MCF 10A (cell line): ENCODE measurements at regions of chr15 and their contacts with region 1.

Region 1: GRCh38 chr15:90387537-90388461 is at the start of gene IQGAP1:
- DNase-seq: peak; percentile 96
- H3K4me3 Mint-ChIP-seq: peak within 1 kb of the TSS; percentile 96
- H3K27ac Mint-ChIP-seq: peak within 1 kb of the TSS; percentile 96
- H3K4me1 Mint-ChIP-seq: peaks cover 43% of the 10 kb centered on the region
- H3K27me3 Mint-ChIP-seq: no peaks in the 10 kb centered on the region
- CTCF ChIP-seq: no peak
- total RNA-seq, gene IQGAP1: 264 and 284 TPM in 2 replicates

Region 2: GRCh38 chr15:90352109-90352893 is 35.5 kb before region 1 on chr15 and contains the start of gene ZNF774:
- CTCF ChIA-PET with region 1: no interaction called
- POLR2A ChIA-PET with region 1: interaction called, 12 read pairs
- intact Hi-C with region 1: no loop called
- DNase-seq: peak; percentile 96
- H3K4me3 Mint-ChIP-seq: peak within 1 kb of the TSS; percentile 80
- H3K27ac Mint-ChIP-seq: peak within 1 kb of the TSS; percentile 81
- H3K4me1 Mint-ChIP-seq: peaks cover 9% of the 10 kb centered on the region
- H3K27me3 Mint-ChIP-seq: no peaks in the 10 kb centered on the region
- CTCF ChIP-seq: no peak
- total RNA-seq, gene ZNF774: 2.6 and 4.8 TPM in 2 replicates

Region 3: GRCh38 chr15:90400406-90401314 is 12.9 kb after region 1 on chr15:
- CTCF ChIA-PET with region 1: interaction called, 3 read pairs
- POLR2A ChIA-PET with region 1: interaction called, 133 read pairs
- intact Hi-C with region 1: loop called (anchors 1 kb)
- DNase-seq: peak; percentile 93
- H3K4me3 Mint-ChIP-seq: peak overlapping the region; percentile 52
- H3K27ac Mint-ChIP-seq: peak overlapping the region; percentile 87
- H3K4me1 Mint-ChIP-seq: peaks cover 30% of the 10 kb centered on the region
- H3K27me3 Mint-ChIP-seq: no peaks in the 10 kb centered on the region
- CTCF ChIP-seq: no peak

Region 4: GRCh38 chr15:90419738-90420406 is 32.1 kb after region 1 on chr15:
- CTCF ChIA-PET with region 1: interaction called, 5 read pairs
- POLR2A ChIA-PET with region 1: interaction called, 58 read pairs
- intact Hi-C with region 1: no loop called
- DNase-seq: peak; percentile 73
- H3K4me3 Mint-ChIP-seq: peak overlapping the region; percentile 64
- H3K27ac Mint-ChIP-seq: peak overlapping the region; percentile 96
- H3K4me1 Mint-ChIP-seq: peaks cover 26% of the 10 kb centered on the region
- H3K27me3 Mint-ChIP-seq: no peaks in the 10 kb centered on the region
- CTCF ChIP-seq: no peak

Region 5: DNA sequence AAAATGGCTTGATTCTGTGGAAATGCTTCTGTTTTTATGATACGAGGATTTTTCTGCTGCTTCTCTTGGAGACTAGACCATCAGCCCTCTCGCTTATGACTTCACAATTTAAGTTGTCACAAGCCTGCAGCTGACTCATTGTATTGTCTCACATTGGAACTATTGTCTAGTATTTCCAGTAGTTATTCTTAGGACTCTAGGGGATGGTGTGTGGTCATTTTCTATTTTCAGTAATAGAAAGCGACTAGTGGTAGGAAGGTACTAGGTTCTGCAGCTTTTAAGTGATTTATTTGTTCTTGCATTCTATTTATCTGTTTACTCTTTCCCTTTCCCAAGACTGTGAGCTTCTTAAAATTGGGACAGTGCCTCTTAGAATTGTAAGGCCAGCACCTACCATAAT is 75.6 kb after region 1 on chr15:
- CTCF ChIA-PET with region 1: interaction called, 9 read pairs
- POLR2A ChIA-PET with region 1: interaction called, 11 read pairs
- intact Hi-C with region 1: no loop called
- DNase-seq: peak; percentile 40
- H3K4me3 Mint-ChIP-seq: no peak overlapping the region
- H3K27ac Mint-ChIP-seq: peak overlapping the region; percentile 5
- H3K4me1 Mint-ChIP-seq: peaks cover 28% of the 10 kb centered on the region
- H3K27me3 Mint-ChIP-seq: no peaks in the 10 kb centered on the region
- CTCF ChIP-seq: no peak

Region 6: GRCh38 chr15:90774731-90775484 is 387.1 kb after region 1 on chr15:
- CTCF ChIA-PET with region 1: no interaction called
- POLR2A ChIA-PET with region 1: no interaction called
- intact Hi-C with region 1: no loop called
- DNase-seq: peak; percentile 16
- H3K4me3 Mint-ChIP-seq: no peak overlapping the region
- H3K27ac Mint-ChIP-seq: no peak overlapping the region
- H3K4me1 Mint-ChIP-seq: peaks cover 7% of the 10 kb centered on the region
- H3K27me3 Mint-ChIP-seq: no peaks in the 10 kb centered on the region
- CTCF ChIP-seq: no peak

Region 7: DNA sequence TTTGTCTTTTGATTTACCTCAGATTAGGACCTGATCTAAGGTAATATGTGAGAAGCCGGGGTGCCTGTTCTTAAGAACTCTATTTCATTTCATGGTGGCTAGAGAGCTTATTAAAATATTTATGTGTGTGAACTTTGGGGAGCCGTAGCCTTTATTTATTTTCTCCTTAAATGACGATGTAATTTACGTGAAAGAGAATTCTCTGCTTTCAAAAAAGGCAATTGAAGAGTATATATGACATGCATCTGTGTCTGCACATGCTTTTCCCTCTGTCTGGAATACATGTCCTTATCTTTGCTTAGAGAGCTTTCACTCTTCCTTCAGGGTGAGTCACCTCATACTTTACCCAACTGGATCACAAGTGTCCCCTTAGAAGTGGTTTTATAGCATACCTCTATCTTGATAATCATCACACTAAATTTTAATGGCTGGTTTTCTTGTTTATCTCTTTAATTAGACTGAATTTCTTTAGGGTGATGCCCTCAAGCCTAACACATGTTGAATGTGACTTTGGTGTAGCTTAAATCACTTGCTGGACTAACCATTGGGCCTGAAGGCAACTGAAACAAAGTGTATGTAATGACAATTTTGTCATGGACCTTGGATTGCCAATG is 891.1 kb after region 1 on chr15:
- CTCF ChIA-PET with region 1: no interaction called
- POLR2A ChIA-PET with region 1: no interaction called
- intact Hi-C with region 1: no loop called
- DNase-seq: no peak
- H3K4me3 Mint-ChIP-seq: no peak overlapping the region
- H3K27ac Mint-ChIP-seq: no peak overlapping the region
- H3K4me1 Mint-ChIP-seq: no peaks in the 10 kb centered on the region
- H3K27me3 Mint-ChIP-seq: peaks cover 16% of the 10 kb centered on the region
- CTCF ChIP-seq: no peak